Endothelial cell of umbilical vein (primary cell): ENCODE measurements at regions of chr15 and their contacts with region 1.

Region 1: DNA sequence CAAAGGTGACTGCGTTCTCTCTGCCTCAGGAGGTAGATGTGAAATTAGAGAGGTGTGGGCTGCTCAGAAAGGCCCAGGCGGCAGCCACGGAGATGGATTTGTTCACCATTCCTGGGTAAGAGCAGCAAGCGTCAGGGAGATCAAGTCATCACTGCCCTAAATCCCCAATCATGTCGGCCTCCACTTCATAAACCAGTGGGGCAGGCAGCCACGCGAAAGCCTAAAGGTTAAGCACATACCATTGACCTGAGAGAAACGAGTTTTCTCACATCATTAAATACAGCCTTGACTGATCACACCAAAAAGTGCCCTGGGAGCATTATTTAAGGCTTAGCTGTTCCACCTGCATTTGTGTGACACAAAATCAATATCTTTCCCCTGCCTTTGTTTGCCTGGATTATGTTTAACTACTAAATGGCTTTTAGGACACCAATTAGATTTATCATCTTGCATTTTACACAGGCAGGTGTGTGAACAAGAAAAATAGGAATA is 50.7 kb upstream of the FOXB1 start:
- DNase-seq: no peak
- H3K4me3 ChIP-seq: no peak overlapping the region
- H3K27ac ChIP-seq: no peak overlapping the region
- H3K4me1 ChIP-seq: no peaks in the 10 kb centered on the region
- H3K27me3 ChIP-seq: peaks cover 2% of the 10 kb centered on the region in 2 experiments
- CTCF ChIP-seq: no peak
- POLR2A ChIP-seq: no peak

Region 2: GRCh38 chr15:59862191-59863155 is 91.0 kb before region 1 on chr15:
- CTCF ChIA-PET with region 1: no interaction called
- POLR2A ChIA-PET with region 1: no interaction called
- dilution Hi-C with region 1: no loop called
- intact Hi-C with region 1: no loop called
- DNase-seq: no peak
- H3K4me3 ChIP-seq: no peak overlapping the region
- H3K27ac ChIP-seq: no peak overlapping the region
- H3K4me1 ChIP-seq: no peaks in the 10 kb centered on the region
- H3K27me3 ChIP-seq: peaks cover 0 to 2% of the 10 kb centered on the region in 2 experiments
- CTCF ChIP-seq: no peak
- POLR2A ChIP-seq: no peak

Region 3: GRCh38 chr15:59972241-59972640 is 18.8 kb after region 1 on chr15:
- CTCF ChIA-PET with region 1: interaction called, 3 read pairs
- POLR2A ChIA-PET with region 1: no interaction called
- dilution Hi-C with region 1: no loop called
- intact Hi-C with region 1: loop called (anchors 2 kb)
- DNase-seq: no peak
- H3K4me3 ChIP-seq: no peak overlapping the region
- H3K27ac ChIP-seq: no peak overlapping the region
- H3K4me1 ChIP-seq: no peaks in the 10 kb centered on the region
- H3K27me3 ChIP-seq: peaks cover 0 to 4% of the 10 kb centered on the region in 2 experiments
- CTCF ChIP-seq: no peak
- POLR2A ChIP-seq: no peak

Region 4: GRCh38 chr15:60035344-60035743 is 81.9 kb after region 1 on chr15:
- CTCF ChIA-PET with region 1: no interaction called
- POLR2A ChIA-PET with region 1: no interaction called
- dilution Hi-C with region 1: no loop called
- intact Hi-C with region 1: no loop called
- DNase-seq: no peak
- H3K4me3 ChIP-seq: no peak overlapping the region
- H3K27ac ChIP-seq: no peak overlapping the region
- H3K4me1 ChIP-seq: no peaks in the 10 kb centered on the region
- H3K27me3 ChIP-seq: peaks cover 0 to 7% of the 10 kb centered on the region in 2 experiments
- CTCF ChIP-seq: no peak
- POLR2A ChIP-seq: no peak